ENCODE measurements at regions of chr1 and their contacts with region 1.

Region 1: GRCh38 chr1:108691942-108692723 is at the start of gene PRPF38B:
- DNase-seq: peak; percentile 94 to 96
- H3K4me3 ChIP-seq: peak within 1 kb of the TSS; percentile 62 to 75 (median 70)
- H3K27ac ChIP-seq: peak within 1 kb of the TSS; percentile 93 to 97 (median 95)
- H3K4me1 ChIP-seq: peaks cover 19 to 23% of the 10 kb centered on the region in 2 donors
- H3K27me3 ChIP-seq: no peaks in the 10 kb centered on the region
- CTCF ChIP-seq: peak in 1 of 6 experiments; percentile 10
- POLR2A ChIP-seq: peak; percentile 12 to 94
- total RNA-seq, gene PRPF38B: 25.0 to 41.0 (median 29.8) TPM

Region 2: GRCh38 chr1:108745980-108746371 is 53.8 kb after region 1 on chr1:
- intact Hi-C with region 1: loop called (anchors 2 kb)
- DNase-seq: no peak
- H3K4me3 ChIP-seq: no peak overlapping the region
- H3K27ac ChIP-seq: peak overlapping the region in 2 of 3 donors; percentile 94 to 95
- H3K4me1 ChIP-seq: peaks cover 13 to 19% of the 10 kb centered on the region in 2 donors
- H3K27me3 ChIP-seq: no peaks in the 10 kb centered on the region
- CTCF ChIP-seq: no peak
- POLR2A ChIP-seq: no peak

Region 3: GRCh38 chr1:108785264-108785663 is 93.1 kb after region 1 on chr1:
- intact Hi-C with region 1: no loop called
- DNase-seq: no peak
- H3K4me3 ChIP-seq: no peak overlapping the region
- H3K27ac ChIP-seq: no peak overlapping the region
- H3K4me1 ChIP-seq: no peaks in the 10 kb centered on the region
- H3K27me3 ChIP-seq: no peaks in the 10 kb centered on the region
- CTCF ChIP-seq: no peak
- POLR2A ChIP-seq: no peak

Measured in thyroid gland (tissue), 4 donors.